MCF 10A (cell line): ENCODE measurements at regions of chr20 and their contacts with region 1.

Region 1: DNA sequence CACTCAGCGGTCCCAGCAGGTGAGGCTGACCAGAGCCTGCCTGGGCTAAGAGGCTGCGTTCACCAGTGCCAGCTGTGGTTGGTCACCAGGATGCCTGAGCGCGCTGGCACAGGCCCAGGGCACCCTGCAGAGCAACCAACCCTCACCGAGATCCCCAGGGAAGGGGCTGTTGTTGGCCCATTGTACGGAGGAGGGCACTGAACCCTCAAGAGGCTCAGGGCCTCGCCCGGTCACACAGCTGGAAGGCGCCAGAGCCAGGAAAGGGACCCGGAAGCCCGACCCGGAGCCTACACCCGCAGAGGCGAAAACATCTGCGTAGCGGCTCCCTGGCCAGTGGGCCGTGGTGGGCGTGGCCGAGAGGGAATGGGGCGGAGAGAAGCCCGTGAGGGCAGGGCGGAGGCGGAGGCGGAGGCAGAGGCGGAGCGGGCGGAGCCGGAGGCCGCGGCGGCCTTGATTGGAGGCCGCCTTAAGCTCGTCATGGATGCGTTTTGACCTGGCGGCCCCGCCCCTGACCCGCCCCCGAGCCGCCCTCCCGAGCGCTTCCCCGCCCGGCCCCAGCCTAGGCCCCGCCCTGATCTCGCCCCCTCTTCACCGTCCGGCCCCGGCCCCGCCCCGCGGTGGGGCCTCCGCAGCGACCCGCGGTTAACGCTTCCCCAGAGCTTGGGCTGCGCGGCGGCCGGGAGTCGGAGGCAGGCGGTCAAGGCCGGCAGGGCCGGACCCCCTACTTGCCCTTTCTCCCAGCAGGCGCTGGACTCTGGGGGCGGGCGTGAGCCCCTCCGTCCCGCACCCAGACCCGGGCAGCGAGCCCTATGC is 2.2 kb upstream of the MRGBP start:
- DNase-seq: peak; percentile 94
- H3K4me3 Mint-ChIP-seq: peak overlapping the region; percentile 76
- H3K27ac Mint-ChIP-seq: peak overlapping the region; percentile 87
- H3K4me1 Mint-ChIP-seq: peaks cover 17% of the 10 kb centered on the region
- H3K27me3 Mint-ChIP-seq: no peaks in the 10 kb centered on the region
- CTCF ChIP-seq: no peak

Region 2: DNA sequence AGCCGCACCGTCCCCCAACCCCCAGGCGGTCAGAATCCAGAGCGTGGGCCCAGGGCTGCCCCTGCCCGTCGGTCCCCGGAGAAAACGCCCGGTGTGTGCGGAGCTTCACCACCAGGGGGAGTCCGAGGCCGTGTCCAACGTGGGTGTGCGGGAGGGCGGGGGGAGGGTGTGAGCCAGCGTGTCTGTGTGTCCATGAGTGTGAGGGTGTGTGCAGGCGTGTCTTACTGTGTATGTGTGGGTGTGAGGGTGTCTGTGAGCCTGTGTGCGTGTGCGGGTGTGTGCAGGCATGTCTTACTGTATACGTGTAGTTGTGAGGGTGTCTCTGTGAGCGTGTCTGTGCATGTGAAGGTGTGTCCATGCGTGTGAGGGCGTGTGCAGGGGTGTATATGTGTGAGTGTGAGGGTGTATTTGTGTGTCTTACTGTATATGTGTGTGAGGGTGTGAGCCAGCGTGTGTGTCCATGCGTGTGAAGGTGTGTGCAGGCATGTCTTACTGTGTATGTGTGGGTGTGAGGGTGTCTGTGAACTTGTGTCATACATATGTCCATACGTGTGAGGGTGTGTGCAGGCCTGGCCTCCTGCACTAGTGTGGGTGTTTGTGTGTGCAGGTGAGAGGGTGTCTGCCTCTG is 293.8 kb before region 1 on chr20:
- CTCF ChIA-PET with region 1: interaction called, 8 read pairs
- POLR2A ChIA-PET with region 1: no interaction called
- intact Hi-C with region 1: loop called (anchors 1 kb)
- DNase-seq: peak; percentile 63
- H3K4me3 Mint-ChIP-seq: no peak overlapping the region
- H3K27ac Mint-ChIP-seq: no peak overlapping the region
- H3K4me1 Mint-ChIP-seq: peaks cover 19% of the 10 kb centered on the region
- H3K27me3 Mint-ChIP-seq: no peaks in the 10 kb centered on the region
- CTCF ChIP-seq: peak; percentile 83

Region 3: GRCh38 chr20:62642040-62642665 is 152.0 kb before region 1 on chr20 and contains the start of gene SLCO4A1:
- CTCF ChIA-PET with region 1: interaction called, 17 read pairs
- POLR2A ChIA-PET with region 1: interaction called, 8 read pairs
- intact Hi-C with region 1: no loop called
- DNase-seq: peak; percentile 80
- H3K4me3 Mint-ChIP-seq: peak within 1 kb of the TSS; percentile 72
- H3K27ac Mint-ChIP-seq: no peak within 1 kb of the TSS
- H3K4me1 Mint-ChIP-seq: peaks cover 7% of the 10 kb centered on the region
- H3K27me3 Mint-ChIP-seq: no peaks in the 10 kb centered on the region
- CTCF ChIP-seq: no peak
- total RNA-seq, gene SLCO4A1: 23.8 and 27.0 TPM in 2 replicates

Region 4: GRCh38 chr20:62678553-62678952 is 115.6 kb before region 1 on chr20:
- CTCF ChIA-PET with region 1: interaction called, 17 read pairs
- POLR2A ChIA-PET with region 1: interaction called, 6 read pairs
- intact Hi-C with region 1: no loop called
- DNase-seq: no peak
- H3K4me3 Mint-ChIP-seq: no peak overlapping the region
- H3K27ac Mint-ChIP-seq: no peak overlapping the region
- H3K4me1 Mint-ChIP-seq: peaks cover 8% of the 10 kb centered on the region
- H3K27me3 Mint-ChIP-seq: no peaks in the 10 kb centered on the region
- CTCF ChIP-seq: no peak

Region 5: GRCh38 chr20:62704301-62704948 is 89.7 kb before region 1 on chr20:
- CTCF ChIA-PET with region 1: interaction called, 85 read pairs
- POLR2A ChIA-PET with region 1: interaction called, 39 read pairs
- intact Hi-C with region 1: loop called (anchors 1 kb)
- DNase-seq: peak; percentile 100
- H3K4me3 Mint-ChIP-seq: peak overlapping the region; percentile 39
- H3K27ac Mint-ChIP-seq: peak overlapping the region; percentile 10
- H3K4me1 Mint-ChIP-seq: peaks cover 37% of the 10 kb centered on the region
- H3K27me3 Mint-ChIP-seq: no peaks in the 10 kb centered on the region
- CTCF ChIP-seq: no peak

Region 6: GRCh38 chr20:62782149-62782892 is 11.8 kb before region 1 on chr20:
- CTCF ChIA-PET with region 1: interaction called, 43 read pairs
- POLR2A ChIA-PET with region 1: interaction called, 5 read pairs
- intact Hi-C with region 1: no loop called
- DNase-seq: no peak
- H3K4me3 Mint-ChIP-seq: no peak overlapping the region
- H3K27ac Mint-ChIP-seq: no peak overlapping the region
- H3K4me1 Mint-ChIP-seq: peaks cover under 1% of the 10 kb centered on the region
- H3K27me3 Mint-ChIP-seq: no peaks in the 10 kb centered on the region
- CTCF ChIP-seq: no peak

Region 7: GRCh38 chr20:62830821-62831220 is 36.7 kb after region 1 on chr20:
- CTCF ChIA-PET with region 1: no interaction called
- POLR2A ChIA-PET with region 1: no interaction called
- intact Hi-C with region 1: no loop called
- DNase-seq: no peak
- H3K4me3 Mint-ChIP-seq: no peak overlapping the region
- H3K27ac Mint-ChIP-seq: no peak overlapping the region
- H3K4me1 Mint-ChIP-seq: peaks cover 14% of the 10 kb centered on the region
- H3K27me3 Mint-ChIP-seq: no peaks in the 10 kb centered on the region
- CTCF ChIP-seq: no peak